MCF 10A (cell line): ENCODE measurements at regions of chr3 and their contacts with region 1.

Region 1: DNA sequence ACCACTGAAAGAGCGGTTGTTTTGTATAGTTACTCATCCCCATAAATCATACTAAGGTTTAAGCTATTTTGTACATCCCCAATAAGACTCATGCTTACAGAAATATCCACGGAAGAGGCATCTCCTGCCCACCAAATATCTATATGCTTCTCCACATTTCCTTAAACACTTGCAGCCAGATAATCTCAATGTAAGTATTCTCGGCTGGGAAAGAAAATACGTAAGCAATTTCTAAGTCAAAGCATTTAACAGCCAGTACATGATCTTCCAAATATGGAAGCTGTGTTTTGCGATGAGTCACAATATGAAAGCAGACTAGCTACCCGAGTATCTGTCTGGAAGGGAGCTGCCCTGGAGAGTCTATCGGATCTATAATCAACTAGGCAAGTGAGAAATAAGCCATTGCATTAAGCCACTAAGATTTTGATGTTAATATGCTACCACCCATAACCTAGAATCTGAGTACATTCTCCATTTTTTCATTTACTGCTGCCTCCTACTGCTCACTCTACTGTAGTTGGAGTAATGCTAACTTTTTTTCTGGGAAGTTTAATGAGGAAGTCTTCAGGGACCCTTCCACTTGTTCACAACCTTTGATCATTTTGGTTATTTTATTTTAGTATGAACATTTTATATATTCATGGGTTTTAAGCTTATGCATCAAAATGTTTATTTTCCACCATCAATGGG is 26.9 kb upstream of the ZMAT3 start:
- DNase-seq: peak; percentile 74
- H3K4me3 Mint-ChIP-seq: peak overlapping the region; percentile 48
- H3K27ac Mint-ChIP-seq: peak overlapping the region; percentile 35
- H3K4me1 Mint-ChIP-seq: peaks cover 7% of the 10 kb centered on the region
- H3K27me3 Mint-ChIP-seq: no peaks in the 10 kb centered on the region
- CTCF ChIP-seq: peak; percentile 22

Region 2: GRCh38 chr3:179083977-179084376 is 14.6 kb before region 1 on chr3:
- CTCF ChIA-PET with region 1: interaction called, 23 read pairs
- POLR2A ChIA-PET with region 1: interaction called, 13 read pairs
- intact Hi-C with region 1: no loop called
- DNase-seq: no peak
- H3K4me3 Mint-ChIP-seq: no peak overlapping the region
- H3K27ac Mint-ChIP-seq: no peak overlapping the region
- H3K4me1 Mint-ChIP-seq: no peaks in the 10 kb centered on the region
- H3K27me3 Mint-ChIP-seq: no peaks in the 10 kb centered on the region
- CTCF ChIP-seq: no peak